PC-3 (cell line): ENCODE measurements at regions of chr5 and their contacts with region 1.

Region 1: DNA sequence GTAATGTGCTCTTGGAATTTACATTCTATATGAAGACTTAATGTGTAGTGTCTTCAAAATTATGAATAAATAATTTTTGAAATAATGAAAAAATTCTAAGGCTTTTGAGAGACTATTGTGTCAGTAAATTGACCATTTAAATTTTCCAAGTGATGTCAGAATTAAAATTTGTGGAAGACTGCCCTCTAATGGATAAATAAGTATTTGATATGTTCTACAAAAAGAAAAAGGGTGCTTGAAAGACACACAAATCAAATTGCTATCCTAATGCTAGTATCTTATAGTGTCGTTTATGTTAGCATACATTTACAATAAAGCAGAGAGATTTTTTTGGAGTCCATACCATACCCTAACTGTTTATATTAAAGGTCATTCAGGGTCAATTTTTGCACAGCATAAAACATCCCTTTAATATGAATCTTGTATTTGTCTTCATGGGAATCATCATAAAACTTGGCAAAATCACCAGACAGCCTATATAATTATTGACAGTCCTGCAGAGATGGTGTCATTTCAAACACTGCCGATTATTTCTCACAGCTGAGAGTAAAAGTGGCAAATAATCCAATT is 120.8 kb upstream of the SLC27A6 start:
- DNase-seq: peak; percentile 63
- ATAC-seq: peak; percentile 53; the same call in 1 of the 2 replicates
- H3K4me3 ChIP-seq: no peak overlapping the region
- H3K27ac ChIP-seq: no peak overlapping the region
- H3K4me1 ChIP-seq: no peaks in the 10 kb centered on the region
- H3K27me3 ChIP-seq: no peaks in the 10 kb centered on the region
- CTCF ChIP-seq: peak; percentile 70

Region 2: GRCh38 chr5:127564002-127564769 is 1280.3 kb before region 1 on chr5:
- CTCF ChIA-PET with region 1: no interaction called
- POLR2A ChIA-PET with region 1: no interaction called
- intact Hi-C with region 1: loop called (anchors 2 kb)
- DNase-seq: peak; percentile 77
- ATAC-seq: peak; percentile 89
- H3K4me3 ChIP-seq: no peak overlapping the region
- H3K27ac ChIP-seq: no peak overlapping the region
- H3K4me1 ChIP-seq: no peaks in the 10 kb centered on the region
- H3K27me3 ChIP-seq: peaks cover 28% of the 10 kb centered on the region; the same call in 1 of the 2 replicates
- CTCF ChIP-seq: peak; percentile 91

Region 3: DNA sequence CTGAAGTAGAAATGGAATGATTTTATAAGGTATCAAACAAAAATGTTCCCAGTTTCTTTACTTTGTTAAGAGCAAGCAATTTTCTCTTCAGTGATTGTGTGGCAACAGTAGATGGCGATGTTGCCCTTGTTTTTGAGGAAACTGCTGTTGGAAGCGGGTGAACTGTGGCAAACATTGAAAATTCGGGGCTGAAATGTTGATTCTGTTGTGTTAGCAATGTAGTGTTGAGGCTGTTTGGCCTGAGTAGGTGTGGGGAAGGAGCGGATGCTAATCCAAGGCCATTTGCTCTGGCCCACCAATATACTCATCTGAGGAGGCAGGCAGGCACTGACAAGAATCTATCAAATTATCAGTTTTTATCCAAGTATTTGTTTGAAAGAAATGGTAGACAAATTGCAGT is 631.1 kb before region 1 on chr5:
- CTCF ChIA-PET with region 1: no interaction called
- POLR2A ChIA-PET with region 1: no interaction called
- intact Hi-C with region 1: loop called (anchors 1 kb)
- DNase-seq: peak; percentile 84
- ATAC-seq: peak; percentile 53
- H3K4me3 ChIP-seq: no peak overlapping the region
- H3K27ac ChIP-seq: no peak overlapping the region
- H3K4me1 ChIP-seq: peaks cover 13% of the 10 kb centered on the region
- H3K27me3 ChIP-seq: no peaks in the 10 kb centered on the region
- CTCF ChIP-seq: peak; percentile 97

Region 4: DNA sequence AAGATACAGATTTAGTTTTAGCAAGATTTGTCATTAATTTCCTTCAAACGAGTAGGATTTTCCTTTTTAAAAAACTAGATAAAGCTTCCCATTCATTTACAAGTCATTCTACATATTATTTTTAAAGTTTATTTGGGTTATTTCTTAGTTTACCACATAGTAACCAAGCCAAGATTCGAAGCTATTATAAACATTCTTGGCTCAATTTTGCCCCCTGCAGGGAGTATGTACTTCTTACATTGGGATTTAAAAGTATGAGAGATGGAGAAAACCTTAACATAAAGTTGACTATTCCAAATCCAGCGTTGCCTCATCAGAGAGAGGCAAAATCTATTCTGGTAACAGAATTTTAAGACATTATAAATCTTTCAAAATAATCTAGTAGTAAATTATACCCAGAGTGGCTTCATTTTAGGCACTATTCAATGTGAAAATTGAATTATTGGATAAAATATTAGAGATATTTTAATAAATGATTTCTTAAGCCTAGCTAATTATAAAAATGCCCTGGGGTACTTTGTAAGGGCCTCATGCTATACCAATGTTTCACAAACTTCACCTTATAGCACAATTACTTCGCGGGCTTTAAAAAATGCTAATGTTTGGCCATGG is 345.5 kb before region 1 on chr5:
- CTCF ChIA-PET with region 1: no interaction called
- POLR2A ChIA-PET with region 1: no interaction called
- intact Hi-C with region 1: loop called (anchors 5 kb)
- DNase-seq: peak; percentile 70
- ATAC-seq: no peak
- H3K4me3 ChIP-seq: no peak overlapping the region
- H3K27ac ChIP-seq: no peak overlapping the region
- H3K4me1 ChIP-seq: peaks cover 5% of the 10 kb centered on the region; the same call in 1 of the 2 replicates
- H3K27me3 ChIP-seq: no peaks in the 10 kb centered on the region
- CTCF ChIP-seq: peak; percentile 77

Region 5: GRCh38 chr5:128579088-128579487 is 265.4 kb before region 1 on chr5:
- CTCF ChIA-PET with region 1: no interaction called
- POLR2A ChIA-PET with region 1: no interaction called
- intact Hi-C with region 1: loop called (anchors 1 kb)
- DNase-seq: peak; percentile 92
- ATAC-seq: peak; percentile 90
- H3K4me3 ChIP-seq: peak overlapping the region; percentile 43; the same call in 1 of the 2 replicates
- H3K27ac ChIP-seq: peak overlapping the region; percentile 97
- H3K4me1 ChIP-seq: peaks cover 38% of the 10 kb centered on the region
- H3K27me3 ChIP-seq: no peaks in the 10 kb centered on the region
- CTCF ChIP-seq: no peak

Region 6: DNA sequence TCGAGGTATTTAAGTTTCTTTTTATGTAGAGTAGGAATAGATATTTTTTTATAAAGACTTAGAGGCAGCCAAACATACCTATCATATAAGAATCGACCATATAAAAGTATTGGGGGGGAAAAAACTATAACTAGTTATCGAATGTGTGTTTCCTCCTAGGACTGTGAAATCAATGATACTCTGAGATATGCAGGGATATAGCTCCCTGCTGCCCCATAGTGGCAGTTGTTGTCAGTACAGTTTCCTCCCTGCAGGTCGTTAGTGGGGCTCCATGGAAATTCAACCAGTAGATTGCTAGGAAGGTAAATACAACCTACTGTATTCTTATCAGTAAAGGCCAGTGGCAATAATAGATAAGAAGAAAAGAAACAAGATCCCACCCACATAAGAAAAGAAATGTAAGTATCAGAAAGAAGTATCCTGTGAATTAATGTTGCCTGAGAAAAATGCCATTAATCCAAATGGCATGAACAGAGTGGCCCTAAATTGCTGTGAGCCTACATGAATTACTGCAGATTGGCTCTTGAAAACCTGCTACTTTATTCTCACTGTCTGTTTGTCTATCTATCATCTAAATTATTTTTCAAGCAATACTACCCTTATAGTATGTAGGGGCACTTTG is 169.5 kb before region 1 on chr5:
- CTCF ChIA-PET with region 1: interaction called, 3 read pairs
- POLR2A ChIA-PET with region 1: no interaction called
- intact Hi-C with region 1: loop called (anchors 2 kb)
- DNase-seq: peak; percentile 84
- ATAC-seq: peak; percentile 84
- H3K4me3 ChIP-seq: no peak overlapping the region
- H3K27ac ChIP-seq: no peak overlapping the region
- H3K4me1 ChIP-seq: peaks cover 3% of the 10 kb centered on the region; the same call in 1 of the 2 replicates
- H3K27me3 ChIP-seq: no peaks in the 10 kb centered on the region
- CTCF ChIP-seq: peak; percentile 93

Region 7: GRCh38 chr5:128684959-128685358 is 159.5 kb before region 1 on chr5:
- CTCF ChIA-PET with region 1: no interaction called
- POLR2A ChIA-PET with region 1: no interaction called
- intact Hi-C with region 1: no loop called
- DNase-seq: no peak
- ATAC-seq: no peak
- H3K4me3 ChIP-seq: no peak overlapping the region
- H3K27ac ChIP-seq: no peak overlapping the region
- H3K4me1 ChIP-seq: peaks cover 12% of the 10 kb centered on the region
- H3K27me3 ChIP-seq: no peaks in the 10 kb centered on the region
- CTCF ChIP-seq: no peak